Caco-2 (cell line): ENCODE measurements at regions of chr17 and their contacts with region 1.

Region 1: DNA sequence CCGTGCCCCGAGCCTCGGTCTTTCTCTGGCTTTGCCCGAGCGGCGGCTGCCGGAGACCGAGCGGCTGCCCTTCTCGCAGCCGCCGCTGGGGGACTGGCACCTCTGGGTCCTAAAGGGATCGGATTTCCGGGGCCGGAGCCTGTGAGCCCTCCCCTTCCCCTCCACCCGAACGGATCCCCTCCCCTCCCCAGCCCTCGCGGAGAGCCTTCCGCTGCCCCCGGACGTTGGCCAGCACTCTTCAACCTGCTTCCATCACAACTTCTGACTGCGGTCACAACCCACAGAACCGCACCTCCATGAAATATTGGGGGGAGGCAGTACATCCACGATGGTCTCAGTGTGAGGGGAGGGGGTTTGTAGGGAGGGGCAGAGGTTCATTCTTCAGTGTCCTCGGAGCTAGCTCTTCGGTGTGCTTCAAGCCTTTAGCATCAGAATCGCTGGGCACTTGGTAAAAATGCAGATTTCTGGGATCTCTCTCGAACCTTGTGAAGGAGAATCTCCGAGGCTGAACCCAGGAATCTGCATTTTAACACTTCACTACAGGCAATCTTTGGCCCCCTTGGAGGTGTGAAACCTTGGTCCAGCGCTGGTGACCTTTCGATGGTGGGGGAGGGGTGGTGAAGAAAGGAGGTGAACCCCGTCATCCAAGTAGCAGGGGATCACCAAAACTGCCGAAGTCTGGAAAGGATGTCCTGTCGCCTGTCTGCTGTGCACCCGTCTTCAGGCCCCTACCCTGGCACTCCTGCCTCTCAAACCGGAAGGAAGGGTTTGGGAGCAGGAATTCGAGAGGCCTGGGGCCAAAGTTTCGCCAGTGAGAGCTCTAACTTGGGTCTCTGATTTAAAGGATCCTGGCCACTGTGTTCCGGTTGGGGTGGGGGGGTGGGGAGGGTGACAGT is 812 bp upstream of the PPP1R9B start:
- DNase-seq: peak; percentile 97 to 98
- H3K4me3 ChIP-seq: peak overlapping the region; percentile 69
- H3K4me3 Mint-ChIP-seq: peak overlapping the region; percentile 81
- H3K27ac Mint-ChIP-seq: peak overlapping the region; percentile 69
- H3K4me1 ChIP-seq: peaks cover 32% of the 10 kb centered on the region
- H3K4me1 Mint-ChIP-seq: peaks cover 39% of the 10 kb centered on the region
- H3K27me3 ChIP-seq: no peaks in the 10 kb centered on the region
- H3K27me3 Mint-ChIP-seq: no peaks in the 10 kb centered on the region
- CTCF ChIP-seq: peak; percentile 97 to 98

Region 2: GRCh38 chr17:49946051-49946607 is 205.2 kb before region 1 on chr17:
- CTCF ChIA-PET with region 1: no interaction called
- POLR2A ChIA-PET with region 1: no interaction called
- intact Hi-C with region 1: no loop called
- DNase-seq: no peak
- H3K4me3 ChIP-seq: no peak overlapping the region
- H3K4me3 Mint-ChIP-seq: no peak overlapping the region
- H3K27ac Mint-ChIP-seq: no peak overlapping the region
- H3K4me1 ChIP-seq: peaks cover 20% of the 10 kb centered on the region
- H3K4me1 Mint-ChIP-seq: peaks cover 12% of the 10 kb centered on the region
- H3K27me3 ChIP-seq: no peaks in the 10 kb centered on the region
- H3K27me3 Mint-ChIP-seq: no peaks in the 10 kb centered on the region
- CTCF ChIP-seq: no peak

Region 3: GRCh38 chr17:50079334-50080095 is 71.8 kb before region 1 on chr17:
- CTCF ChIA-PET with region 1: no interaction called
- POLR2A ChIA-PET with region 1: no interaction called
- intact Hi-C with region 1: no loop called
- DNase-seq: no peak
- H3K4me3 ChIP-seq: no peak overlapping the region
- H3K4me3 Mint-ChIP-seq: no peak overlapping the region
- H3K27ac Mint-ChIP-seq: no peak overlapping the region
- H3K4me1 ChIP-seq: no peaks in the 10 kb centered on the region
- H3K4me1 Mint-ChIP-seq: no peaks in the 10 kb centered on the region
- H3K27me3 ChIP-seq: no peaks in the 10 kb centered on the region
- H3K27me3 Mint-ChIP-seq: no peaks in the 10 kb centered on the region
- CTCF ChIP-seq: peak in 1 of 2 experiments; percentile 14

Region 4: DNA sequence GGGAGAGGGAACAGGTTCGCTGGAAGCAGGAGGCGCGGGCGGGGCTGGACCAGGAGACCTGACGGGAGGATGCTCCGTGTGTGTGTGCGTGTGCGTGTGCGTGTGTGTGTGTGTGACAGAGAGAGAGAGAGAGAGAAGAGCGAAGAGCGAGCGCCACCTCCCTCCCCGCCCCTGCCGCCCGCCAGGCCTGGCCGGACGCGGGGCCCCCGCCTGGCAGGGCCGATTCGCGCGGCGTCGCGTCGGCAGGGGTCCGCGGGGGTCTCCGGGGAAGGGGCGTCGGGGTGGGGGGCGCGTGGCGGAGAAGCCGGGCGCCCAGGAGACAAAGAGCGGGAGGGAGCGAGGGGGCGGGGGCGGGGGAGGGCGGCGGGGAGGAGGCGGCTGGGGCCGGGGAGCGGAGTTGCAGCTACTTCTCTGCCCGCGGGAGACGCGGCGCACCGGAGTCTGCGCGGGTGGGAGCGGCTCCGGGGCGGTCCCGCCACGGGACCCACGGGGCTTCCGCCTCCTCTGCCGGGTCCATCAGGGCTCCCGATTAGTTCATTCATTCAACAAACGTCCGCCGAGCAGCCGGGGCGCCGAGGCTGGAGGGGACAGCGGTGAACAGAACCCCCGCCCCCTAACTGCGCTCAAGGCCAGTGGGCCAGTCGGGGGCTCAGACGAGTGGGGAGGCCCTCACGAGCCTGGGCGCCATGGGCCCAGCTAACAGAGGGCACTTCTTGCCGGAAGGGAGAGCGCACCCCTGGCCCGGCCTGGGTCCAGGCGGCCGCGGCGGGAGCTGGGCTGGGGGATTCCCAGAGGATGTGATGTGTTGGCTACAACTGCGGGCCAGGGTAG is 21.3 kb before region 1 on chr17 and contains the start of gene SAMD14:
- CTCF ChIA-PET with region 1: interaction called, 5 read pairs
- POLR2A ChIA-PET with region 1: interaction called, 3 read pairs
- intact Hi-C with region 1: loop called (anchors 2 kb)
- DNase-seq: peak; percentile 69 to 82
- H3K4me3 ChIP-seq: peak within 1 kb of the TSS; percentile 50
- H3K4me3 Mint-ChIP-seq: peak within 1 kb of the TSS; percentile 79
- H3K27ac Mint-ChIP-seq: peak within 1 kb of the TSS; percentile 34
- H3K4me1 ChIP-seq: peaks cover 27% of the 10 kb centered on the region
- H3K4me1 Mint-ChIP-seq: peaks cover 27% of the 10 kb centered on the region
- H3K27me3 ChIP-seq: no peaks in the 10 kb centered on the region
- H3K27me3 Mint-ChIP-seq: no peaks in the 10 kb centered on the region
- CTCF ChIP-seq: no peak
- total RNA-seq, gene SAMD14: 2.2 and 3.4 TPM in 2 replicates

Region 5: GRCh38 chr17:50139950-50140871 is 11.1 kb before region 1 on chr17:
- CTCF ChIA-PET with region 1: interaction called, 11 read pairs
- POLR2A ChIA-PET with region 1: no interaction called
- intact Hi-C with region 1: loop called (anchors 1 kb)
- DNase-seq: peak; percentile 89 to 93
- H3K4me3 ChIP-seq: no peak overlapping the region
- H3K4me3 Mint-ChIP-seq: no peak overlapping the region
- H3K27ac Mint-ChIP-seq: no peak overlapping the region
- H3K4me1 ChIP-seq: no peaks in the 10 kb centered on the region
- H3K4me1 Mint-ChIP-seq: peaks cover 4% of the 10 kb centered on the region
- H3K27me3 ChIP-seq: no peaks in the 10 kb centered on the region
- H3K27me3 Mint-ChIP-seq: no peaks in the 10 kb centered on the region
- CTCF ChIP-seq: peak; percentile 99 to 100

Region 6: GRCh38 chr17:50169121-50169764 is 18.0 kb after region 1 on chr17:
- CTCF ChIA-PET with region 1: interaction called, 15 read pairs
- POLR2A ChIA-PET with region 1: no interaction called
- intact Hi-C with region 1: no loop called
- DNase-seq: peak; percentile 88
- H3K4me3 ChIP-seq: no peak overlapping the region
- H3K4me3 Mint-ChIP-seq: no peak overlapping the region
- H3K27ac Mint-ChIP-seq: no peak overlapping the region
- H3K4me1 ChIP-seq: peaks cover 3% of the 10 kb centered on the region; the same call in 1 of the 2 replicates
- H3K4me1 Mint-ChIP-seq: peaks cover 7% of the 10 kb centered on the region
- H3K27me3 ChIP-seq: no peaks in the 10 kb centered on the region
- H3K27me3 Mint-ChIP-seq: no peaks in the 10 kb centered on the region
- CTCF ChIP-seq: peak; percentile 98 to 100

Region 7: DNA sequence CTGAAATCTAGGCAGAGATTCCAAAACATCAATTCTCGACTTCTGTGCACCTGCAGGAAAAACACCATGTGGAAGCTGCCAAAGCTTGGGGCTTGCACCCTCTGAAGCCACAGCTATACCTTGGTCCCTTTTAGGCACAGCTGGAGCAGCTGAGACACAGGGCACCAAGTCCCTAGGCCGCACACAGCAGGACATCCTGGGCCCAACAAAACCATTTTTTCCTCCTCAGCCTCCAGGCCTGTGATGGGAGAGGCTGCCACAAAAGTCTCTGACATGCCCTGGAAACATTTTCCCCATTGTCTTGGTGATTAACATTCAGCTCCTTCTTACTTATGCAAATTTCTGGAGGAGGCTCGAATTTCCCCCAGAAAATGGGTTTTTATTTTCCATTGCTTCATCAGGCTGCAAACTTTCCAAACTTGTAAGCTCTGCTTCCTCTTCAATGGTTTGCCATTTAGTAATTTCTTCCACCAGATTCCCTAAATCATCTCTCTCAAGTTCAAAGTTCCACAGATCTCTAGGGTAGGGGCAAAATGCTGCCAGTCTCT is 74.5 kb after region 1 on chr17:
- CTCF ChIA-PET with region 1: no interaction called
- POLR2A ChIA-PET with region 1: no interaction called
- intact Hi-C with region 1: no loop called
- DNase-seq: no peak
- H3K4me3 ChIP-seq: no peak overlapping the region
- H3K4me3 Mint-ChIP-seq: no peak overlapping the region
- H3K27ac Mint-ChIP-seq: no peak overlapping the region
- H3K4me1 ChIP-seq: peaks cover 10% of the 10 kb centered on the region
- H3K4me1 Mint-ChIP-seq: peaks cover 10% of the 10 kb centered on the region
- H3K27me3 ChIP-seq: no peaks in the 10 kb centered on the region
- H3K27me3 Mint-ChIP-seq: no peaks in the 10 kb centered on the region
- CTCF ChIP-seq: no peak

Region 8: DNA sequence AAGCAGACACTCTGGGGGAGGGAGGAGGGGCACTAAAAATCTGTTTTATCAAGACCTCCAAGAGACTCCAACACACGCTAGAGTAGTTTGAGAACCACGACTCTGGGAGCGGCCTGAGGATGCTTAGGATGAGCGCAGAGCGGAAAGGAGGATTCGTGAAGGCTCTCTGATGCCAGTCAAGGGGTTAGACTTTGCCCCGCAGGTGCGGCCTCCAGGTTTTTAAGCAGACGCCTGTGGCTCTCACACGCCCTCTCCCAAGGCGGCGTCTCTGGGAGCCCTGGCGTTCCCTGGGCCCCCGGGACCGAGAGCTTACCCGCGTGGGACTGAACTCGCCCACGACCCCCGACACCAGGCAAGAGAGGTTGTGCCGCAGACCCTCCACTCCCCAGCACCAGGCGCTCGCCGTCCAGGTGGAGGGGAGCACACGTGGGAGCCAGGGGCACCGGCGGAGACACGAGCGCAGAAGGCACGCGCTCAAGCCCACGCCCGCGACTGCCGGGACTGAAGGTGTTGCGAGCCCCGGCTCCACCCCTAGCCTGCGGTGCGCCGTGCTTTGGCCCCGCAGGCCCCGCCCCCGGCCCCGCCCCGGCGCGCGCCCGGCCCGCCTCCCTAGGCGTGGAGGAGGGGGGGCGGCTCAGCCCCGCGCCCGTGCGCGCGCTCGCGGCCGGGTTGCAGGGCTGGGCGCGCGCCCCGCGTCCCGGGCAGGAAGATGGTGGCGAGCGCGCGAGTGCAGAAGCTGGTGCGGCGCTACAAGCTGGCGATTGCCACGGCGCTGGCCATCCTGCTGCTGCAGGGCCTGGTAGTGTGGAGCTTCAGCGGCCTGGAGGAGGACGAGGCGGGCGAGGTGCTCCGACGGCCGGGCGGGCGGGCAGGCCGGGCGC is 194.4 kb after region 1 on chr17 and contains the start of gene XYLT2:
- CTCF ChIA-PET with region 1: interaction called, 3 read pairs
- POLR2A ChIA-PET with region 1: interaction called, 14 read pairs
- intact Hi-C with region 1: no loop called
- DNase-seq: peak; percentile 94 to 99
- H3K4me3 ChIP-seq: peak within 1 kb of the TSS; percentile 85
- H3K4me3 Mint-ChIP-seq: peak within 1 kb of the TSS; percentile 96
- H3K27ac Mint-ChIP-seq: peak within 1 kb of the TSS; percentile 81
- H3K4me1 ChIP-seq: peaks cover 13% of the 10 kb centered on the region
- H3K4me1 Mint-ChIP-seq: peaks cover 22% of the 10 kb centered on the region
- H3K27me3 ChIP-seq: no peaks in the 10 kb centered on the region
- H3K27me3 Mint-ChIP-seq: no peaks in the 10 kb centered on the region
- CTCF ChIP-seq: no peak
- total RNA-seq, gene XYLT2: 72.9 and 75.8 TPM in 2 replicates